Motor neuron (in vitro differentiated cells): ENCODE measurements at regions of chr9 and their contacts with region 1.

Region 1: GRCh38 chr9:127224178-127224882 is 40.2 kb upstream of the GARNL3 start:
- ATAC-seq: peak; percentile 27 to 83 (median 55)
- H3K4me3 ChIP-seq: peak overlapping the region; percentile 53 to 76 (median 62)
- H3K27ac ChIP-seq: peak overlapping the region in 1 of 2 donors; percentile 71
- H3K4me1 ChIP-seq: peaks cover 3 to 5% of the 10 kb centered on the region in 2 donors

Region 2: GRCh38 chr9:127074561-127075548 is 149.5 kb before region 1 on chr9:
- in situ Hi-C with region 1: no loop called
- ATAC-seq: peak; percentile 81 to 92 (median 91)
- H3K4me3 ChIP-seq: no peak overlapping the region
- H3K27ac ChIP-seq: peak overlapping the region in 1 of 2 donors; percentile 62
- H3K4me1 ChIP-seq: peaks cover 22 to 24% of the 10 kb centered on the region in 2 donors

Region 3: DNA sequence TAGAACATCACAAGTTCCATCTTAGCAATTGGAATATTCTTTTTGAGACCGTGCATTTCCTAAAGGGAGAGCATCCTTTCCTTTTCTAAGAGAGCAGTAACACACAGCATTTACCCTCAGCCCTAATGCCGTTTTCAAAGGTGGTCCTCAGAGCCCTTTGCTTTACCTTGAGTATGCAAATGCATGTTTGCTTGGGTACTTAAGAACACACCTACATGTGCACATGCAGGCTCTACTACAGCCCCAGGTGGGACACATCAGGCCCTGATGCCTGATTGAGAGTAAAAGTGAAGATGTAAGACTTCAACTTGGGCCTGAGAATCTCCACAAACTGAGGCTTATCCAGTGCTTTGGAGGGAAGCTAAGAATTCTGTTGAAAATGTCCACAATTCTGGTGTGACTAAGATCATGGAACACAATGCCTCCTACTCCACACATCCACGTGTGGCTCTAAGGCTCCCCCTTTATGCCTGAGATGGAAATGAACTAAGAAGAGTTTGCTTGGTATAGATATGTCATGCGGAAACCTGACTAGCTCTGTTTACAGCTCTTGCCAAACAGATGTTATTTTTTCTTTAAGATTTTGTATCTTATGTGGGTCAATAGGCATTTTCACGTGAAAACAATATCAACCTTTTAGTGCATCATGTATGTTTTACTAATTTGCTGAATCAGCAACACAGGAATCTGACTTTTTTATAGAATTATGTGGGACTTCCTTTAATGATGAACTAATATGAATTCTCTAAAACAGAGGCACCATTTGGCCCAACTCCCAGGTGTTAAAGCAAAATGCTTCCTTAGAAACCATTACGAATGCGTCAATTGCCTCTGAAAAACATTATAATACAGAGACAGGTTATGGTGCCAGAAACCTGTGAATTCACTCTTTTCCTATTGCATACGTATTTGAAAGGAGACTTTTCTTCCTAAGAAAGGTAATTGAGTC is 123.8 kb after region 1 on chr9:
- in situ Hi-C with region 1: loop called in 1 of 9 experiments (anchors 25 kb)
- ATAC-seq: peak in 6 of 8 experiments; percentile 44 to 89 (median 86)
- H3K4me3 ChIP-seq: no peak overlapping the region
- H3K27ac ChIP-seq: no peak overlapping the region
- H3K4me1 ChIP-seq: peaks cover 7 to 10% of the 10 kb centered on the region in 2 donors

Region 4: GRCh38 chr9:127396808-127397497 is 172.6 kb after region 1 on chr9 and contains the start of gene SLC2A8:
- in situ Hi-C with region 1: loop called in 2 of 9 experiments (anchors 25 kb)
- ATAC-seq: peak; percentile 90 to 94 (median 93)
- H3K4me3 ChIP-seq: peak within 1 kb of the TSS; percentile 64 to 85 (median 72)
- H3K27ac ChIP-seq: peak within 1 kb of the TSS; percentile 69 to 77
- H3K4me1 ChIP-seq: peaks cover 5 to 7% of the 10 kb centered on the region in 2 donors
- total RNA-seq, gene SLC2A8: 9.8 to 23.3 (median 11.3) TPM